ENCODE measurements at regions of chr5 and their contacts with region 1.

Region 1: GRCh38 chr5:156402387-156402921 is 75.5 kb downstream of the SGCD start:
- DNase-seq: peak; percentile 78
- H3K4me3 Mint-ChIP-seq: no peak overlapping the region
- H3K27ac Mint-ChIP-seq: no peak overlapping the region
- H3K4me1 Mint-ChIP-seq: peaks cover 12% of the 10 kb centered on the region
- H3K27me3 Mint-ChIP-seq: peaks cover 8% of the 10 kb centered on the region

Region 2: DNA sequence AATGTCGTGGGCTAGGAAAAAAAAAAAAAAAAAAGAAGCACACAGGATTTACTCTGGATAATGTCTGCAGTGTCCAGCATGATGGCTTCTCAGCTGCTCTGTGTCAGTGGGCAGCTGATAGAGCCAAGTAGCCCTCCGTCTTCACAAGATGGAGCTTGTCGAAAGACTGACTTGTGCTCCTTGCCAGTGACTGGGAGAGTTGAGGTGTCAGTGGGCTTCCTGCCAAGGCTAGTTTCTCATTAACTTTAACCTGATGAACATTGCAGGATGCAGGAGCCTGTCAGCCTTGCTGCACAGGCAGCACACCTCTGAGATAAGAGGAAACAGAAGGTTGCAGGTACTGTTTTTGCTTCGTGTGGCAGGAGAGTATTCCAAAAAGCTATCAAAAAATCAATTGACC is 246.9 kb before region 1 on chr5:
- CTCF ChIA-PET with region 1: no interaction called
- intact Hi-C with region 1: no loop called
- DNase-seq: no peak
- H3K4me3 Mint-ChIP-seq: no peak overlapping the region
- H3K27ac Mint-ChIP-seq: no peak overlapping the region
- H3K4me1 Mint-ChIP-seq: no peaks in the 10 kb centered on the region
- H3K27me3 Mint-ChIP-seq: no peaks in the 10 kb centered on the region

Region 3: DNA sequence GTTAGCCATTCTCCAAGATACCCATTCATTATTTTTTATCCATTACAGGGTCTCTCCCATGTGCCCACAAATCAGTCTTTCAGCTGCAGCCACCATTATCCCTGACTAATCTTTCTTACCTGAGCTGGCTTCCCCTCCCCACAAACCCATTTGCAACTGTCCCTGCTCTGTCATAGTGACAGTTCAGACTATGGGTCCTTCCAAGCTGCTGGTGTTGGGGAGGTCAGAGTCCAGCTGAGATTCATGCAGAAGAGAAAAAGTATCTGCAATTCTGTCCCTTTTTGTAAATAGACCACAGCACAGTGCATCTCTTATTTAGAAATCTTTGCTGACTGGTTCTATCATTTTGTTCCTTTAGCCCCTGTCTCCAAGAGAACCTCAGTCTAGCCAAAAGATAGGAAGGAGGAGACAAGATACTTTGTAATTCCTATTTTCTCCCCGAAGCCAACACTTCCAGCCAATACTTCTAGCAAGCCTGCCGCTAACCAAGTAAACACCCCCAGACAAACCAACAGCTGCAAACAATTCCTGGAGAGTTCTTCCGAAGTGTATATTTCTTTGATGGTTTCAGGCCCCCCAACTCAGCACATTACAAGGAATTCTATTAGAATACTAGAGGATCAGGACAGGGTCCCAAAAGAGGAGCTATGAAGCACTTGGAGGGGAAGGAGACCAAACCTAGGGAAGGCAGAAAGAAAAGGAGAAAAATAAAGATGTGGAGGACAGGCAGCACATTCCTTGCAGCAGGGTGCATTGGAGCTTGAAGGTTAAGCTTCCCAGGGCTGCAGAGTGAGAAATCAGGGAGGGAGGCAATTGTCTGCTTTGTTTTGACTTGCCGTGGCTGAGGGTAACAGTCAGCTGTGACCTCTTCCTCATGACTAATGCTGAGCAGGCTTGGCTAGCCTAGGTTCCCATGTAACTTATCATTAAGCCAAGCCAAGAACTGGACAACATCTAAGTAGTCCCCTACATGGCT is 73.0 kb after region 1 on chr5:
- CTCF ChIA-PET with region 1: no interaction called
- intact Hi-C with region 1: loop called (anchors 2 kb)
- DNase-seq: no peak
- H3K4me3 Mint-ChIP-seq: no peak overlapping the region
- H3K27ac Mint-ChIP-seq: no peak overlapping the region
- H3K4me1 Mint-ChIP-seq: peaks cover 7% of the 10 kb centered on the region
- H3K27me3 Mint-ChIP-seq: peaks cover 12% of the 10 kb centered on the region

Region 4: GRCh38 chr5:157108976-157109375 is 706.5 kb after region 1 on chr5 and contains the start of gene HAVCR2:
- CTCF ChIA-PET with region 1: no interaction called
- intact Hi-C with region 1: loop called (anchors 5 kb)
- DNase-seq: peak; percentile 87
- H3K4me3 Mint-ChIP-seq: peak within 1 kb of the TSS; percentile 65
- H3K27ac Mint-ChIP-seq: peak within 1 kb of the TSS; percentile 87
- H3K4me1 Mint-ChIP-seq: peaks cover 40% of the 10 kb centered on the region
- H3K27me3 Mint-ChIP-seq: no peaks in the 10 kb centered on the region
- total RNA-seq, gene HAVCR2: 10.2 to 10.4 TPM